ENCODE measurements at regions of chr1 and their contacts with region 1.

Region 1: DNA sequence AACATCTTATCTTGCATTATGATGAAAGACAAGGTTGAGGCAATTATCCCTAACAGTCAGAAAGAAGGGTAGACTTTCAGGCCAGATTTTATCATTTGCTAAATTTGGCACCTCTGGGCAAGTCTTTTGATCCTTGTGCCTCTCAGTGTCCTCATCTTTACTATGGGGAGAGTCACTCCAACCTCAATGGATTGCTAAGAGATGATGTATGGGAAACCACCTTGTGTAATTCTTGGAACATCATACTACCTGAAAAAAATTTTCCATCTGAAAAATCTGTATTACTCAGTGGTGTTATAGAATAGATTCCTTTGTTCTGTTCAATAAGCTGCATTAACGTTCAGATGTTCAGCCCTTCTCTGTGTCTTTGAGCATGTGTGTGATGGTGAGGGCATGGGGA is 230.7 kb downstream of the TGFB2 start:
- DNase-seq: no peak
- ATAC-seq: no peak
- H3K4me3 ChIP-seq: no peak overlapping the region
- H3K27ac ChIP-seq: no peak overlapping the region
- H3K4me1 ChIP-seq: no peaks in the 10 kb centered on the region
- H3K27me3 ChIP-seq: no peaks in the 10 kb centered on the region
- CTCF ChIP-seq: no peak

Region 2: DNA sequence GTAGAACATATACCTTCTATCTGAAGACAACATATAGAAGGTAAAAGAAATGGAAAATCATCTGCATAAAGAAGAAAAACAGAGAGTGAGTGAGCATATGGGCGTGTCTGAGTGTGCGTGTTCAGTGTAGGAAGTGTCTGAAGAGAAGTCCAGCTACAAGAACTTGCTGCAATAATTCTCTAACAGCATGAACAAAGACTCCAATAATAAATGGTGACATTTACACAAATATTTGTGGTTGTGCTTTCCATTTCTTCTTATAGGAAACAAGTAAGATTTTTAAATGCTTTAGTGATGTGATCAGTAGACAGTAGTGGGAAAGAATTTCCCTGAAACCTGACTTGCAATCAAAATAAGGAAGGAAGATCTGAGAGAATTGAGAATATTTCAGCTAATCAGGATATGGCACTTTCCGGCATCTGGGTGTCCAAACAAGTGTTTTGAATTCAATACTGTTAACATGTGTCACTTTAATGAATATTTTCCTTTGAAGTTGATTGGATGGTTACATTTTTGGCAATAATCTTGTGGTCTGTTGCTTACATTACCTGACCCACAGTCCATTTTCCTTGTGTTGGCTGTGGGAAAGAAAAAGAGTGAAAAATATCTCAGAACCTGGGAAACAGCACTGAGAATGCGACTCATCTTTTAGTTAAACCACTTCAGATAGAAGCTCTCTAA is 76.7 kb before region 1 on chr1:
- intact Hi-C with region 1: loop called in 1 of 3 experiments (anchors 5 kb)
- DNase-seq: no peak
- ATAC-seq: peak in 3 of 4 donors; percentile 55 to 79 (median 73)
- H3K4me3 ChIP-seq: peak overlapping the region in 1 of 4 donors; percentile 18
- H3K27ac ChIP-seq: peak overlapping the region in 3 of 4 donors; percentile 4 to 61 (median 57)
- H3K4me1 ChIP-seq: no peaks in the 10 kb centered on the region
- H3K27me3 ChIP-seq: no peaks in the 10 kb centered on the region
- CTCF ChIP-seq: no peak

Region 3: GRCh38 chr1:218763538-218763937 is 187.7 kb after region 1 on chr1:
- intact Hi-C with region 1: no loop called
- DNase-seq: no peak
- ATAC-seq: no peak
- H3K4me3 ChIP-seq: no peak overlapping the region
- H3K27ac ChIP-seq: no peak overlapping the region
- H3K4me1 ChIP-seq: no peaks in the 10 kb centered on the region
- H3K27me3 ChIP-seq: no peaks in the 10 kb centered on the region
- CTCF ChIP-seq: no peak